ENCODE measurements at regions of chr11 and their contacts with region 1.

Region 1: GRCh38 chr11:129117595-129118350 is 74.4 kb downstream of the ARHGAP32 start:
- DNase-seq: peak; percentile 87
- H3K4me3 ChIP-seq: no peak overlapping the region
- H3K27ac ChIP-seq: no peak overlapping the region
- H3K4me1 ChIP-seq: no peaks in the 10 kb centered on the region
- H3K27me3 ChIP-seq: no peaks in the 10 kb centered on the region
- CTCF ChIP-seq: peak; percentile 98

Region 2: GRCh38 chr11:129331871-129332274 is 214.1 kb after region 1 on chr11:
- CTCF ChIA-PET with region 1: interaction called, 10 read pairs
- POLR2A ChIA-PET with region 1: no interaction called
- intact Hi-C with region 1: loop called (anchors 1 kb)
- DNase-seq: peak; percentile 91
- H3K4me3 ChIP-seq: no peak overlapping the region
- H3K27ac ChIP-seq: no peak overlapping the region
- H3K4me1 ChIP-seq: peaks cover 5% of the 10 kb centered on the region
- H3K27me3 ChIP-seq: no peaks in the 10 kb centered on the region
- CTCF ChIP-seq: peak; percentile 99

Region 3: DNA sequence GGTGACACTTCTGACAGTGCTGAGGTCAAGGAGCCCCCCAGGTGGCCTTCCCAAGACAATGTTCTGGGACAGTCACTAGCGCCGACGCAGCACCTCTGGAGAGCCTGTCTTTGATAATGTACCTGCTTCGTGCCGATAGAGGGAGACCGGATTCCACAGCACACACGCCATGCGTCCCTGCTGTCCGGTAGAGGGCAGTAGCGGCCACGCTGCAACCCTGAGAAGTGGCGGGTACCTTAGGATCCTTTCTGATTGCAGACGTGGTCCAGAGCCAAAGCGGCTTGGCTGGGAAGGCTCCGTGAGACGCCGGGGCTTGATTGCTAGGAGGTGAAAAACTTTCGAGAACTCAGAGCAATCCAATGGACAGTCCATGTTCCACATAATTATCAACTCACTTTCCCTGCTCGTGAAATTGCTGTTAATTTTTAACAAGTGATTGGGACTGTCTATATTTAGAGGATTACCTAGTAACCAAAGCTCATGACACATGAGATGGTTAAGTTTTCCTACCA is 246.4 kb after region 1 on chr11:
- CTCF ChIA-PET with region 1: no interaction called
- POLR2A ChIA-PET with region 1: no interaction called
- intact Hi-C with region 1: loop called (anchors 10 kb)
- DNase-seq: peak; percentile 97
- H3K4me3 ChIP-seq: peak overlapping the region; percentile 10
- H3K27ac ChIP-seq: no peak overlapping the region
- H3K4me1 ChIP-seq: peaks cover 39% of the 10 kb centered on the region
- H3K27me3 ChIP-seq: no peaks in the 10 kb centered on the region
- CTCF ChIP-seq: peak; percentile 100

Region 4: DNA sequence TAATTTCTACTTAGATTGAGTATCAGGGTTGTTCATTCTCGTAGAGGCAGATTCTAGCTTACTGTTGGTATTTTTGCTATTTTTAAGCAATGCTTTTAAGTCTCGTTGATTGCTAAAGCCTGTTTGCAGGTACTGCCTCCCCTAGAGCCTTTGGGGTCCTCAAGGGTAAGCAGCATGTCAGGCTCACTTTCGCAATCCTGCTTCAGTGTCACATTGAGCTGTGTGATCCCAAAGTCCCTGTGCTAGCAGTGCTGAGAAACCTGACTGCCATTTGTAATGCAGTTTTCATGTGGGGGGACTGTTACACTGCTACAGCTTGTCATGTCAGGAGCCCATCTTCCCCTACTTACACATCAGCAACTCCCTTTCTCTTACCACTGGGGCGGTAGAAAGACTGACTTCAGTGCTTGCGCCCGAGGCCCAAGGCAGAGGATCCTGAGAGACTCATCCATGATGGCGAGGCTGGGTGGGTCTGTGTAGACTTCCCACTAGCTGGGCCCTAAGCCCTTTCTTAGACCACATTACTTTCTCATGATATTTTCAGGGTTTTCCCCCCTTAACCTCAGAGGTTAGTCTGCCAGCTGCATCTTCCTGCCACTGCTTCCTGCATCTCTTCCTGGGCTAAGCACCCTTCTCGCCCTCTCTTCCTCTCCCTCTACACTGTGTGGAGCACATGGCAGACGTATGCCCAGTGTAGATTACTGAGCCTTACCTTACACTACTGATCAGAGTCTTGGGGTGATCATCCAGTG is 1001.0 kb after region 1 on chr11:
- CTCF ChIA-PET with region 1: no interaction called
- POLR2A ChIA-PET with region 1: no interaction called
- intact Hi-C with region 1: no loop called
- DNase-seq: no peak
- H3K4me3 ChIP-seq: no peak overlapping the region
- H3K27ac ChIP-seq: no peak overlapping the region
- H3K4me1 ChIP-seq: peaks cover 6% of the 10 kb centered on the region
- H3K27me3 ChIP-seq: no peaks in the 10 kb centered on the region
- CTCF ChIP-seq: no peak